Heart left ventricle (tissue), 16 donors: ENCODE measurements at regions of chr19 and their contacts with region 1.

Region 1: GRCh38 chr19:58499021-58499927 is 12.5 kb downstream of the SLC27A5 start:
- DNase-seq: peak; percentile 99 to 100 (median 100)
- ATAC-seq: peak; percentile 97 to 99 (median 98)
- H3K4me3 ChIP-seq: peak overlapping the region; percentile 13 to 79 (median 62)
- H3K27ac ChIP-seq: peak overlapping the region; percentile 30 to 88 (median 82)
- H3K4me1 ChIP-seq: peaks cover 0 to 27% (median 22%) of the 10 kb centered on the region in 12 donors
- H3K27me3 ChIP-seq: no peaks in the 10 kb centered on the region
- CTCF ChIP-seq: peak in 6 of 12 donors; percentile 8 to 42 (median 26)
- POLR2A ChIP-seq: peak in 1 of 2 donors; percentile 65

Region 2: GRCh38 chr19:58475714-58476497 is 23.4 kb before region 1 on chr19 and contains the start of gene ZNF446:
- intact Hi-C with region 1: loop called in 2 of 10 experiments (anchors 1 kb)
- DNase-seq: peak; percentile 96 to 98 (median 97)
- ATAC-seq: peak; percentile 93 to 95 (median 94)
- H3K4me3 ChIP-seq: peak within 1 kb of the TSS; percentile 36 to 87 (median 72)
- H3K27ac ChIP-seq: peak within 1 kb of the TSS; percentile 65 to 93 (median 90)
- H3K4me1 ChIP-seq: peaks cover 0 to 25% (median 14%) of the 10 kb centered on the region in 12 donors
- H3K27me3 ChIP-seq: no peaks in the 10 kb centered on the region
- CTCF ChIP-seq: peak in 2 of 12 donors; percentile 6 to 15
- POLR2A ChIP-seq: peak in 1 of 2 donors; percentile 59
- total RNA-seq, gene ZNF446: 4.3 to 9.3 (median 6.0) TPM

Region 3: GRCh38 chr19:58581227-58582151 is 82.2 kb after region 1 on chr19:
- intact Hi-C with region 1: no loop called
- DNase-seq: peak; percentile 84 to 91 (median 88)
- ATAC-seq: peak; percentile 84 to 96 (median 93)
- H3K4me3 ChIP-seq: no peak overlapping the region
- H3K27ac ChIP-seq: peak overlapping the region in 9 of 12 donors; percentile 15 to 75 (median 52)
- H3K4me1 ChIP-seq: peaks cover 0 to 16% (median 4%) of the 10 kb centered on the region in 12 donors
- H3K27me3 ChIP-seq: no peaks in the 10 kb centered on the region
- CTCF ChIP-seq: peak; percentile 86 to 98 (median 95)
- POLR2A ChIP-seq: no peak